Activated CD4-positive, alpha-beta T cell treated with anti-CD3 and anti-CD28 coated beads for 36 hours (primary cell): ENCODE measurements at regions of chr19 and their contacts with region 1.

Region 1: GRCh38 chr19:1360818-1361461 is 22.8 kb upstream of the NDUFS7 start:
- DNase-seq: no peak
- ATAC-seq: no peak
- H3K4me3 Mint-ChIP-seq: no peak overlapping the region
- H3K27ac Mint-ChIP-seq: no peak overlapping the region
- H3K4me1 Mint-ChIP-seq: peaks cover 30% of the 10 kb centered on the region
- H3K27me3 Mint-ChIP-seq: no peaks in the 10 kb centered on the region

Region 2: GRCh38 chr19:1315470-1316231 is 45.3 kb before region 1 on chr19:
- CTCF ChIA-PET with region 1: no interaction called
- POLR2A ChIA-PET with region 1: no interaction called
- intact Hi-C with region 1: loop called in 1 of 2 experiments (anchors 5 kb)
- DNase-seq: peak; percentile 65
- ATAC-seq: peak; percentile 83
- H3K4me3 Mint-ChIP-seq: no peak overlapping the region
- H3K27ac Mint-ChIP-seq: no peak overlapping the region
- H3K4me1 Mint-ChIP-seq: no peaks in the 10 kb centered on the region
- H3K27me3 Mint-ChIP-seq: peaks cover 20% of the 10 kb centered on the region